ENCODE measurements at regions of chrX and their contacts with region 1.

Region 1: GRCh38 chrX:43939187-43939926 is 33.8 kb downstream of the NDP start:
- DNase-seq: no peak
- H3K4me3 ChIP-seq: no peak overlapping the region
- H3K27ac ChIP-seq: no peak overlapping the region
- H3K4me1 ChIP-seq: peaks cover 7% of the 10 kb centered on the region
- H3K27me3 ChIP-seq: no peaks in the 10 kb centered on the region
- CTCF ChIP-seq: no peak
- POLR2A ChIP-seq: no peak

Region 2: DNA sequence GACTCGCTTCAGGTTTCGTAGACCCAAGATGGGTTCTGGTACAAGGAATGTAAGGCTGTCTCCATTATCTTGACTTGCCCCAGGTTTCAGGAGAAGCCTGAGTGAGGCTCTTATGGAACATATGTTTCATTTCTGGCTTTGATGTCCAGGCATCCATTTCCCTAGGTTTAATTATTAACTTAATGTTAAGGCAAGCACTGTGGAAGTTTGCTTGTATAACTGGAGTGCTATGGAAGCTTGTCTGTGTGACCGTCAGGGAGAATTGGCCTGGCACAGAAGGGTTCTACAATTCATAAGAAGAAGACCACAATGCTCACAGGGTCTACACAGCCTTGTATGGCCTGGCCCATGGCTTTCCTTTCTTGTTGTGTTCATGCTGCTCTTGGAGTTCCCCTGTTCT is 1114.2 kb before region 1 on chrX:
- CTCF ChIA-PET with region 1: no interaction called
- POLR2A ChIA-PET with region 1: no interaction called
- dilution Hi-C with region 1: no loop called
- intact Hi-C with region 1: loop called (anchors 5 kb)
- DNase-seq: no peak
- H3K4me3 ChIP-seq: no peak overlapping the region
- H3K27ac ChIP-seq: no peak overlapping the region
- H3K4me1 ChIP-seq: no peaks in the 10 kb centered on the region
- H3K27me3 ChIP-seq: no peaks in the 10 kb centered on the region
- CTCF ChIP-seq: no peak
- POLR2A ChIP-seq: no peak

Region 3: GRCh38 chrX:44012484-44013096 is 73.2 kb after region 1 on chrX:
- CTCF ChIA-PET with region 1: no interaction called
- POLR2A ChIA-PET with region 1: no interaction called
- dilution Hi-C with region 1: no loop called
- intact Hi-C with region 1: no loop called
- DNase-seq: peak; percentile 69
- H3K4me3 ChIP-seq: no peak overlapping the region
- H3K27ac ChIP-seq: peak overlapping the region; percentile 52
- H3K4me1 ChIP-seq: peaks cover 9% of the 10 kb centered on the region
- H3K27me3 ChIP-seq: no peaks in the 10 kb centered on the region
- CTCF ChIP-seq: no peak
- POLR2A ChIP-seq: no peak

Measured in endothelial cell of umbilical vein (primary cell).